Natural killer cell (primary cell): ENCODE measurements at regions of chr10 and their contacts with region 1.

Region 1: DNA sequence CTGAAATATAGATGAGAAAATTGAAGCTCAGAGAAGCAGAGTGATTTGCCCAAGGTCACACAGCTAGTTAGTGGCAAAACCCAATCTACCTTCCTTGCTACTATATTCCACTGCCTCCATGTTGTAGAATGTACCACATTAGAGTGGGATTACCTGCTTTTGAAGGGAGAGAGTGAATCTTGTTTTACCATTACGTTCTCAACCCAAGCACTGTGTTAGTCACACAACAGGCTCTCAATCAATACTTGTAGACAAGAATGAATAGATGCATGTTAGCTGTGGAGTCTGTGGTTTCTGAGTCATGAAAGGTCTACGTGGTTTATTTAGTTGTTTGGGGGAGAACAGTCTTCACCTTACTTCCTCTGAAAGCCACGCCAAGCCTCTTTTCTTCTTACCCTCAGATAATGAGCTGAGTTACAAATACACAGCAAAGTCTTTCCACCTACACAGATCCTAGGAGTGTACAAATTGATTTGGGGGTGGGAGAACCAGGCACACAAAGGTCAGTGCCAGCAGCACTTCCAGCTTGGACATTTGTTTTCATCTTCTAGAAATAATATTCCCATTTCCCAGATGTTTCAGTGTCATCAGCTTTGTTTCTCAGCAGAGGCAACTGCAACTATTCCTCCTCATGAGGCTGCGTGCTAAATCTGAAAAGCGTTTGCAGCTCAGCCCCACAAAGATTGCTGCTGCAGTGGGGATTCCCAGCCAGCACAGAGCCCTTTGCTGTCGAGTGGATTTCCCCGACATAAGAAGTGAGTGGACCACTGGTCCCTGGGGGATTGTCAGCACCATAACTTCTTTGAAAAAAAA is 71.5 kb upstream of the ADO start:
- DNase-seq: peak; percentile 33 to 88
- ATAC-seq: peak; percentile 73 to 80 (median 79)
- H3K4me3 ChIP-seq: no peak overlapping the region
- H3K4me3 Mint-ChIP-seq: peak overlapping the region; percentile 28
- H3K27ac ChIP-seq: peak overlapping the region; percentile 50
- H3K27ac Mint-ChIP-seq: peak overlapping the region in 1 of 2 donors; percentile 78
- H3K4me1 ChIP-seq: peaks cover 33% of the 10 kb centered on the region
- H3K4me1 Mint-ChIP-seq: peaks cover 14% of the 10 kb centered on the region in 2 donors
- H3K27me3 ChIP-seq: no peaks in the 10 kb centered on the region
- H3K27me3 Mint-ChIP-seq: no peaks in the 10 kb centered on the region
- CTCF ChIP-seq: no peak

Region 2: GRCh38 chr10:62528441-62528840 is 204.6 kb before region 1 on chr10:
- intact Hi-C with region 1: no loop called
- DNase-seq: peak in 1 of 2 donors; percentile 67
- ATAC-seq: peak; percentile 85 to 93 (median 86)
- H3K4me3 ChIP-seq: no peak overlapping the region
- H3K4me3 Mint-ChIP-seq: peak overlapping the region; percentile 70
- H3K27ac ChIP-seq: peak overlapping the region; percentile 71
- H3K27ac Mint-ChIP-seq: peak overlapping the region; percentile 74 to 76
- H3K4me1 ChIP-seq: peaks cover 16% of the 10 kb centered on the region
- H3K4me1 Mint-ChIP-seq: peaks cover 38 to 47% of the 10 kb centered on the region in 2 donors
- H3K27me3 ChIP-seq: no peaks in the 10 kb centered on the region
- H3K27me3 Mint-ChIP-seq: no peaks in the 10 kb centered on the region
- CTCF ChIP-seq: no peak

Region 3: DNA sequence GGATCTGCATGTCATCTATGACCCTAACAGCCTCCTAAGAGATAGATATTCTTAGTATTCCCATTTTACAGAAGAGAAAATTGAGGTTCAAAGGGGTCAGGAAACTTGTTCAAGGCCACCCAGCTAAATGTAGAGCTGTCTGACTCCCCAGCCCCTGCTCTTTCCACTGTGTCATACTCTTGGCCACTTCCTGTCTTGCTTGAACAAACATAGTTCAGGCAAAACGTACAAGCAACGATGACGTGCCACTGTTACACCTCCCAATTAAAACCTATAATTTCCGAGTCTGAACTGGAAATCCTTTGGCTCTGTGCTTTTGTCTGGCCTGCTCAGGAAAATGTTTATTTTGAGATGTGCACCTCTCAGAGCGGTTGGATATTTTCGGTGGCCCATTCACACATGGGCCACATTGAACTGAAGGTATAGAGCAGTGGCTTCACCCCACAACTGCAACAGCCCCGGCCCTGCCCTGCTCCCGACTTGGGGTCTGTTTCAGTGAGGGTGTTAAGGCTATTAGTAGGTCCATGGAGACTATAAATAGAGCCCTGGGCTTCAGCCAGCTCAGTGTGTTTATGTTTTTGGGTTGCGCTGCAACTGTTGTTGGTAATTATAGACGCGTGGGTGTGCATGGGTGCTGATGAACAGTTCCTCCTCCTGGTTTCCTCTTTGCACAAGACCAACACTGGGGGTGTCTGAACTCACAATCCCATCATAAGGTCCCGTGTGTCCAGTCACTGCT is 100.8 kb before region 1 on chr10:
- intact Hi-C with region 1: loop called (anchors 1 kb)
- DNase-seq: peak; percentile 65 to 80
- ATAC-seq: peak; percentile 77 to 91 (median 83)
- H3K4me3 ChIP-seq: no peak overlapping the region
- H3K4me3 Mint-ChIP-seq: peak overlapping the region; percentile 63
- H3K27ac ChIP-seq: peak overlapping the region; percentile 85
- H3K27ac Mint-ChIP-seq: peak overlapping the region in 1 of 2 donors; percentile 99
- H3K4me1 ChIP-seq: peaks cover 44% of the 10 kb centered on the region
- H3K4me1 Mint-ChIP-seq: peaks cover 19 to 23% of the 10 kb centered on the region in 2 donors
- H3K27me3 ChIP-seq: no peaks in the 10 kb centered on the region
- H3K27me3 Mint-ChIP-seq: no peaks in the 10 kb centered on the region
- CTCF ChIP-seq: no peak